Endothelial cell of umbilical vein (primary cell): ENCODE measurements at regions of chr13 and their contacts with region 1.

Region 1: GRCh38 chr13:20945952-20946383 is 43.4 kb upstream of the XPO4 start:
- DNase-seq: peak; percentile 21
- H3K4me3 ChIP-seq: peak overlapping the region in 2 of 3 experiments; percentile 5 to 22
- H3K27ac ChIP-seq: no peak overlapping the region
- H3K4me1 ChIP-seq: peaks cover 8% of the 10 kb centered on the region
- H3K27me3 ChIP-seq: peaks cover 0 to 6% of the 10 kb centered on the region in 2 experiments
- CTCF ChIP-seq: no peak
- POLR2A ChIP-seq: no peak

Region 2: GRCh38 chr13:21240586-21240985 is 294.6 kb after region 1 on chr13:
- CTCF ChIA-PET with region 1: no interaction called
- POLR2A ChIA-PET with region 1: interaction called, 12 read pairs
- dilution Hi-C with region 1: no loop called
- intact Hi-C with region 1: no loop called
- DNase-seq: peak; percentile 13
- H3K4me3 ChIP-seq: no peak overlapping the region
- H3K27ac ChIP-seq: no peak overlapping the region
- H3K4me1 ChIP-seq: no peaks in the 10 kb centered on the region
- H3K27me3 ChIP-seq: peaks cover 4% of the 10 kb centered on the region in 2 experiments
- CTCF ChIP-seq: no peak
- POLR2A ChIP-seq: no peak

Region 3: DNA sequence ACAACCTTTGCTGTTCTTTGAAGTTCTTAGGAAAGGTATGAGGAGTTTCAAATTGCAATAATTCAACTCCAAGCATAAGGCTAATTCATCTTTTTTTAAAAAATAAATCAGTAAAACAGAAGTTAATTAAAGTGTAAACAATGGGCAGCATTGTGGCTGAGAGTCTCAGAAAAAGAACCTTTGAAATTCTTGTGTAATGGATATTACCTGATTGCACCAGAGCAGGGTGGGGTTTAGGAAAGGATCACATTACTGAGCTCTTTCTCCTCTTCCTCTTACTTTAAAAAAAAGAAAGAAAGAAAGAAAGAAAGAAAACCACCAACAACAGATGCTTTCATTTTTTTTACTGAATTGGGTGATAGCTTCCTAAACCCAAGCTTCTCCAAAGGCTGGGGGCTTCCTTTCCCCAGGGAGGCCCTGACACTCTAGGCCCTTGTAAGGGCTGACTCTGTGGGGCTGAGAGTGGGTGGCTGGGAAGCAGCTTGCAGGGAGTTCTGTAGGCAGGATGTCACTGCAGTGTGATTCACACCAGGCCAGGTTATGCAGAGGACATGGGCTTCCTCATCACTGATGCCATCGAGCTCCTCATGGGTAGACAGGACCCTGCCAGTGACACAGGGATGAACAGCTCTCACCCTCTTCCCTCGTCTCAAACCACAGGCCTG is 1289.4 kb after region 1 on chr13:
- CTCF ChIA-PET with region 1: no interaction called
- POLR2A ChIA-PET with region 1: no interaction called
- dilution Hi-C with region 1: no loop called
- intact Hi-C with region 1: loop called (anchors 10 kb)
- DNase-seq: no peak
- H3K4me3 ChIP-seq: no peak overlapping the region
- H3K27ac ChIP-seq: no peak overlapping the region
- H3K4me1 ChIP-seq: no peaks in the 10 kb centered on the region
- H3K27me3 ChIP-seq: no peaks in the 10 kb centered on the region
- CTCF ChIP-seq: no peak
- POLR2A ChIP-seq: no peak